ENCODE measurements at regions of chr4 and their contacts with region 1.

Region 1: DNA sequence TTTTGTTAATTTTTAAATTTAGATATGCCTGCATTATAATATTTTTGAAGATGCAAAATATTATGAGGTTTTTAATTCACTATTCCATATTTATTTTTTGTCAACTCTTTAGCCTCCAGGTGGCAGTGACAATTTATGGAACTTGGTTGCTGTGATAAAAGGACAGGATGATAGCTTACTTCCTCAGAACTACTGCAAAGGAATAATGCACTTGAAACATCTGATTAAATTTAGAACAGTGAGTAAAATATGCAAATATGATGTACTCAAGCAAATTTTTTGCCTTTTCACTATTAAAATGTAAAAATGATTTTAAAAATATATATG is 45.1 kb downstream of the SPATA4 start:
- DNase-seq: no peak
- H3K4me3 ChIP-seq: no peak overlapping the region
- H3K27ac ChIP-seq: peak overlapping the region in 1 of 4 donors; percentile 37
- H3K4me1 ChIP-seq: peaks cover 0 to 12% (median 6%) of the 10 kb centered on the region in 4 donors
- H3K27me3 ChIP-seq: no peaks in the 10 kb centered on the region
- CTCF ChIP-seq: peak; percentile 47 to 49 (median 49)
- EP300 ChIP-seq: no peak
- POLR2A ChIP-seq: no peak

Region 2: DNA sequence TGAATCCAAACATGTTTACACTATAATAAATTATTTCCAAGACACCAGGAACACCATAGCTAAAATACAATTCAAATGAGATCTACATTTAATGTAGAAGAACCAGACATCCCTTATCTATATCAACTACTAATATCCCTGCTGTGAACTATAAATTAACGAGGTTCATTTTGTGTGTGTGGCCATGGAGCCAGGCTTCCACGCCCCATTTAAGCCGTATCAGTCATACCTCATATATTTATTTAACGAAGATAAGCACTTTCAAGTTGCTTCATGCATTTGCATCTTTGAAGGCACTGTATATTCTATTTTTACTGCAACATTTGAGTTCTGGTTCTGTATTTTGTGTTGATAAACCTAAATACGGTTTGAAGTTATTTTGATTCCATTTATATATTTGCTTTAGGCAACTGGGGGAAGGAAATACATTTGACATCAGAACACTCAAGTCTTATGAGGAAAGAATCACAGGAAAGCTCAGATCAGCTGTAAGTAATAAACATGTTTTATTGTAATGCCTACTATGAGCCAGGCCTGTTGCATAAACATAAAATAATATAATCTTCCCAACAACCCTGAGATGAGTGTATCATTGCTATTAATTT is 129.7 kb before region 1 on chr4:
- intact Hi-C with region 1: no loop called
- DNase-seq: no peak
- H3K4me3 ChIP-seq: no peak overlapping the region
- H3K27ac ChIP-seq: no peak overlapping the region
- H3K4me1 ChIP-seq: no peaks in the 10 kb centered on the region
- H3K27me3 ChIP-seq: no peaks in the 10 kb centered on the region
- CTCF ChIP-seq: no peak
- EP300 ChIP-seq: no peak
- POLR2A ChIP-seq: no peak

Region 3: DNA sequence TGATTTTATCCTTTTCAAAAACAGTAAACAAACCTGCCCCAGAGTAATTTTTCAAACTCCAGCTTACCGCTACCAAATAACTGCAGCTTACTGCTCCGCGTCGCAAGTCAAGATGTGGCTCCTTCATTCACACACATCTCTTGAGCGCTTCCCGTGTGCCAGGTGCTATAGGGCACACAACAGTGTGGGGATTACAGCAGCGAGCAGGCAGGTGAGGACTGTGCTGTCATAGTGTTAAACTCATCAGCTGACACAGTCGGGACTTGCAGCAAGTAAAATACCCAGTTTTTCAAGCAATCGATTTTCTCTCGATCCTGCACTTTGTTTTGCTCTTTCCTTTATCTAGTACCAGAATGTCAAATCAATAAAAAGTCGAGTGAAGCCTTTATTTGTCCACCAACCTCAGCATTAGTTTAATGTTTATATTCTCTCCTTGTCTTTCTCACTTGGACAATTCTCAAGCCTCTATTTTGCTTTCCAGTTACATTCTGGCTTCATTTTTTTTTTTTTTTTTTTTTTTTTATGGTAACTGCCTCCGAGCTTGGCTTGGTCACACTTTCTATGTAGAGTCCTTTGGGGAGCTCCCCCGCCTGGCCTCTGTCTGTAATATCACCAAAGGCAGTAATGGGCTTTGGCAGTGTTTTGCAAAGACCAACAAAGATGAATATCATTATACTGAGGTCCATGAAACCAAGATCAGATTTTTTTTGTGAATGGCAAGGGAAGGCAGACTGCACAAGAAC is 127.0 kb after region 1 on chr4:
- intact Hi-C with region 1: loop called (anchors 1 kb)
- DNase-seq: peak; percentile 89
- H3K4me3 ChIP-seq: peak overlapping the region; percentile 29 to 39 (median 34)
- H3K27ac ChIP-seq: peak overlapping the region; percentile 7 to 55 (median 48)
- H3K4me1 ChIP-seq: peaks cover 0 to 19% (median 13%) of the 10 kb centered on the region in 4 donors
- H3K27me3 ChIP-seq: no peaks in the 10 kb centered on the region
- CTCF ChIP-seq: peak; percentile 50 to 62 (median 60)
- EP300 ChIP-seq: no peak
- POLR2A ChIP-seq: no peak

Region 4: DNA sequence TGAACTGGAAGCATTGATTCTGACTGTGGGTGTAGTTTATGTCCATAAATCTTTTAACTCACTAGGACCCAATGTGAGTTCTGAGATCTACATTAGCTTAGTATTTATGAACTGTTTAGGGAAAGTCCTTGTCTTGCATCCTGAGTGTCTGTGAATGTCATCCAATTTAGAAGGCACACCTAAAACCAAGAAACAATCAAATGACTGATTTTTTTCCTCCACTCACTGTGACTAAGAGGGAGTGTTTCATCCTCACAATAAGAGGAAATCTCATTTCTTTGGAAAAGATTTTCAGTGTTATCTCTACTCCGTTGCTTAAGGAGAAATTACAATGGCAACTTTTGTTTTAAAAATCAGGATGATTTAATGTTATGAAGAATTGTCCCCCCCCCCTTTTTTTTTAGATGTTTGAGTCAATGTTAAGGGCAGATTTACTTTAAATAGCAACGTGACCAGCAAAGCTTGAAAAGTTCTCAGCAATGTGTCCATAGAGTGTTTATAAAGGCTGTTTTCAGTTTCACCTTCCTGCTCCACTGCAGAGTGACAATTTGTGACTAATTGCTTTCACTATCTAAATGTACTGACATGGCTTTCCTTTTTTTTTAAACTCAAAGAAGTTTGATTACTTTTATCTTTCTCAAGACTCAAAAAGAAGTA is 342.5 kb after region 1 on chr4:
- intact Hi-C with region 1: no loop called
- DNase-seq: no peak
- H3K4me3 ChIP-seq: peak overlapping the region in 1 of 4 donors; percentile 6
- H3K27ac ChIP-seq: no peak overlapping the region
- H3K4me1 ChIP-seq: no peaks in the 10 kb centered on the region
- H3K27me3 ChIP-seq: no peaks in the 10 kb centered on the region
- CTCF ChIP-seq: no peak
- EP300 ChIP-seq: no peak
- POLR2A ChIP-seq: no peak